Activated T-helper 2 cell treated with anti-CD3 and anti-CD28 coated beads, Interferon-gamma antibody, Interleukin-2, Interleukin-4, amounts not matched to agents 10 μg/mL and 5 μg/mL and 100 μg/mL, durations not matched to agents 14 hours and 24 hours and 36 hours (primary cell): ENCODE measurements at regions of chr19 and their contacts with region 1.

Region 1: GRCh38 chr19:40465557-40466150 is at the start of gene BLVRB:
- DNase-seq: peak; percentile 99
- H3K4me3 Mint-ChIP-seq: peak within 1 kb of the TSS; percentile 87
- H3K27ac Mint-ChIP-seq: peak within 1 kb of the TSS; percentile 78
- H3K4me1 Mint-ChIP-seq: peaks cover 21% of the 10 kb centered on the region
- H3K27me3 Mint-ChIP-seq: peaks cover 24% of the 10 kb centered on the region
- total RNA-seq, gene BLVRB: 10.4 and 11.3 TPM in 2 replicates

Region 2: DNA sequence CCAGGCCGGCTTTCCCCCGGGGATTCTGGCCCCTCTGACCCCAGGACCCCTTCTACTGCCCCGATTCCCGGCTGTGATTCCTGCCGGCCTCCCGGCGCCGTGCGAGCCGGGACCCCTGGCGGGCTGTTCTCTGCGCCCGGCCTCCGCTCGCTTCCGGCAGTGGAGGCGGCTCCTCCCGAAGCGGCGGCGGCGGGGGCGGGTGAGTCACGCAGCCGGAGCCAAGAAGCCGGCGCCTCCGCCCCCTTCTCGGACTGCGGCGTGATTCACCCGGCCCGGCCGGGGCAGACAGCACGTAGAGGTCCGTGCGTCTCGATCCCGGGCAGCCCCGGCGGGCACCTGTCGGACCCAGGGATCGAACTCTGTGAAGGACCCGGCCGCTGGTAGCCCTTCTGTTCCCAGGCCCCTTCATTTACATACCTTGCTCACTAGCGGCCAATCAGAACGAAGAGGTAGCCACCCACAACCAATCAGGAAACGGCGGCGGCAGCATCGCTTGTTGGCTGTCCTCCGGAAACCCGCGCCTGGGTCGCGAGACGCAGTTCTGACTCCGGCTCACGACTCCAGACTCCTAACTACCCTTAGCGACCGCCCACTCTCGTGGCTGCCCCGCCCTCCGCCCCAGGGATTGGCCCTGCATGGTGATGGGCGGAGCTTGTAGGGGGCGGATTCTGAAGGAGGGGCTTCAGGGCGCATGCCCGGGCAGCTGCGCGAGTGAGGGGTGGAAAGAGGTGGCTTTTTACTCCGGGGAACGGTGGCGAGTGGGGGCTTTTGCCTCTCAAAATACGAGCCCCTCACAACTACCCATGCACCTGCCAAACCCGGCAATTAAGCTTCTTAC is 40.0 kb before region 1 on chr19 and contains the start of gene SERTAD1:
- intact Hi-C with region 1: loop called (anchors 1 kb)
- DNase-seq: peak; percentile 100
- H3K4me3 Mint-ChIP-seq: peak within 1 kb of the TSS; percentile 97
- H3K27ac Mint-ChIP-seq: peak within 1 kb of the TSS; percentile 96
- H3K4me1 Mint-ChIP-seq: peaks cover 18% of the 10 kb centered on the region
- H3K27me3 Mint-ChIP-seq: no peaks in the 10 kb centered on the region
- total RNA-seq, gene SERTAD1: 17.5 and 18.1 TPM in 2 replicates

Region 3: DNA sequence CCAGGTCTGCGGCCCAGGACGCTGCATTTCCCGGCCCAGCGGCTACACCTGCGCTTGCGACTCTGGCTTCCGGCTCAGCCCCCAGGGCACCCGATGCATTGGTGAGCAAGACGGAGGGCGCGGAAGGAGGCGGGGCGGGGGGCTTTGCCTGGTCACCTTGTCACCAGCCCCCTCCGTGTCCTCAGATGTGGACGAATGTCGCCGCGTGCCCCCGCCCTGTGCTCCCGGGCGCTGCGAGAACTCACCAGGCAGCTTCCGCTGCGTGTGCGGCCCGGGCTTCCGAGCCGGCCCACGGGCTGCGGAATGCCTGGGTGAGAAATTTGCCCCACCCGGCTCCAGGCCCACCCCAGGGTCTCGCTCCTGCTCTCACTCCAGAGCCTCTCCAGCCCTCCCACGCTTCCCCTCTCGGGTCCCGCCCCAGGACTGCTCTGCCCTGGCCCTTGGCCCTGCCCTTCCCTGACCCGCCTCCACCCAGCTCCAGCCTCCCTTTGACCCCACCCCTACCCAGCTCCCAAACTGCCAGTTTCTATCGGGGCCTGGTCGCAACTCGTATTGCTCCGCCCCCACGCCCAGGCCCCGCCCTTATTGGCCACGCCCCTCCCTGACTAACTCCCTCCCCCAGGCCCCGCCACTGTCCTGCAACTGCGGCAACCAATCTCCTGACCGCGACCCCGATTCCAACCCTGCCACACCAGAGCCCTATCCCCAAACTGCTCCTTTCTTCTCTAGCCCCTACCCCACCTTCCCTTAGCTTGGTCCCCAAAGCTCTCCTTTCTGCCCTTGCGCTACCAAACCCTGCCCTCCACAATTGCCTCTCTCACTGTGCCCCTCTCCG is 144.1 kb after region 1 on chr19:
- intact Hi-C with region 1: loop called (anchors 5 kb)
- DNase-seq: peak; percentile 87
- H3K4me3 Mint-ChIP-seq: peak overlapping the region; percentile 80
- H3K27ac Mint-ChIP-seq: peak overlapping the region; percentile 93
- H3K4me1 Mint-ChIP-seq: peaks cover 35% of the 10 kb centered on the region
- H3K27me3 Mint-ChIP-seq: no peaks in the 10 kb centered on the region